ENCODE measurements at regions of chr1 and their contacts with region 1.

Region 1: GRCh38 chr1:1374929-1375662 is at the start of gene AURKAIP1:
- DNase-seq: peak; percentile 94 to 99
- H3K4me3 ChIP-seq: peak within 1 kb of the TSS; percentile 87 to 97 (median 88)
- H3K27ac ChIP-seq: peak within 1 kb of the TSS; percentile 63; the same call in 1 of the 2 replicates
- H3K4me1 ChIP-seq: peaks cover 0 to 12% (median 9%) of the 10 kb centered on the region in 4 experiments; a peak in 5 of 7 replicates
- H3K27me3 ChIP-seq: no peaks in the 10 kb centered on the region
- CTCF ChIP-seq: peak in 2 of 3 experiments; percentile 8 to 14; a peak in 2 of 4 replicates
- EP300 ChIP-seq: peak in 1 of 2 experiments; percentile 74; a peak in 1 of 3 replicates
- POLR2A ChIP-seq: peak in 1 of 2 experiments; percentile 54; a peak in 1 of 3 replicates
- RAD21 ChIP-seq: peak in 1 of 2 experiments; percentile 1; a peak in 1 of 4 replicates
- total RNA-seq, gene AURKAIP1: 194 TPM in 2 replicates

Region 2: DNA sequence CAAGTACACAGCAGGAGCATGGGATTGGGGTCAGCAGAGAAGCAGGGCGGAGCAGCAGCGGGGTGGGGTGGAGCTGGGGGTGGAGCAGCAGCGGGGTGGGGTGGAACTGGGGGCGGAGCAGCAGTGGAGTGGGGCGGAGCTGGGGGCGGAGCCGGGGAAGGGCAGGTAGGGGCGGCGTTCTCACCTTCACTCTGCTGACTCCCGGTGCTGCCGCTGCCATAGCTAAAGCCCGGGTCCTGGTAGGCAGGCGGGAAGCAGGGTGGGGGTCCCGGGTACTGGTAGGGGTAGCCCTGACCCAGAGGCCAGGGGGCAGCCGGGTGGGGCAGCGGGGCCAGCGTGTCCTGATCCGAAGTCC is 37.3 kb before region 1 on chr1:
- CTCF ChIA-PET with region 1: interaction called, 34 read pairs
- POLR2A ChIA-PET with region 1: interaction called, 18 read pairs
- DNase-seq: peak in 1 of 2 experiments; percentile 87
- H3K4me3 ChIP-seq: no peak overlapping the region
- H3K27ac ChIP-seq: no peak overlapping the region
- H3K4me1 ChIP-seq: no peaks in the 10 kb centered on the region; a peak in 1 of 7 replicates
- H3K27me3 ChIP-seq: no peaks in the 10 kb centered on the region; a peak in 1 of 7 replicates
- CTCF ChIP-seq: no peak
- EP300 ChIP-seq: no peak
- POLR2A ChIP-seq: no peak
- RAD21 ChIP-seq: no peak

Region 3: DNA sequence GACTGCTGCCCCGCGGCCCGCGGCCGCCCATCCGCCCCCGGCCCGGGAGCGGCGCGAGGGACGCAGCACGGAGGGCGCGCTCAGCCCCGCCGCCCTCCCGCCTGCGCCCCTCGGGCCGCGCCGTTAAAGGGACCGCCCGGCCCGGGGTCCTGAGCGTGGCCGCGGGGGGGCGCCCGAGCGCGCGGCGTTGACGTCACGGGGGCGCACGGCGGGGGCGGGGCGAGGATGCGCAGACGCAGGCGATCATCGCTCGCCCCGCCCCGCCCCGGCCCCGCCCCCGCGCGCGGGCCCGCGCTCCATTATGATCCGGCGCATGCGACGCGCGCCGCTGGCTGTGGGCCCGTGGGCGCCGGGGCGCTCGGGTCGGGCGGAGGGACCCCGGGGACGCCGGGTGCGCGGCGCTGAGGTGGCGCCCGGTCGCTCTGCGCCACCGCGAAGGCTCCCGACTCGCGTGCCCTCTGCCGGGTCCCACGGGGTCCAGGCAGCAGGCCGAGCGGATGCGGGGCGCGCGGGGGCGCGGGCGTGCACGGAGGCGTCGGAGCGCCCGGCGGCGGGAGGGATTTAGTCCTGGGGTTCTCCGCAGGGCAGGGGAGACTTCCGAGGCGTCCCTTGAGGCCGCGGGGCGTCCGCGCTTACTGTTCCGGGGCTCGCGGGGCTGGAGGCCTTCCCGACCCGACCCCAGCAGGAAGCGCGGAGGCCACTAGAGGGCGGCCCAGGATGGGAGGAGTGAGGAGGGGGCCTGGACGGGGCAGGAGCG is 25.7 kb before region 1 on chr1 and contains the start of gene DVL1:
- CTCF ChIA-PET with region 1: interaction called, 40 read pairs
- POLR2A ChIA-PET with region 1: interaction called, 80 read pairs
- DNase-seq: peak in 1 of 2 experiments; percentile 85
- H3K4me3 ChIP-seq: peak within 1 kb of the TSS; percentile 60 to 91 (median 79)
- H3K27ac ChIP-seq: peak within 1 kb of the TSS; percentile 83; the same call in 1 of the 2 replicates
- H3K4me1 ChIP-seq: peaks cover 0 to 45% (median 33%) of the 10 kb centered on the region in 4 experiments; a peak in 6 of 7 replicates
- H3K27me3 ChIP-seq: peaks cover 0 to 6% (median 4%) of the 10 kb centered on the region in 4 experiments; a peak in 5 of 7 replicates
- CTCF ChIP-seq: peak in 2 of 3 experiments; percentile 33 to 56; a peak in 3 of 4 replicates
- EP300 ChIP-seq: no peak
- POLR2A ChIP-seq: no peak
- RAD21 ChIP-seq: peak; percentile 45 to 49; a peak in 3 of 4 replicates
- total RNA-seq, gene DVL1: 56.0 and 58.9 TPM in 2 replicates

Region 4: DNA sequence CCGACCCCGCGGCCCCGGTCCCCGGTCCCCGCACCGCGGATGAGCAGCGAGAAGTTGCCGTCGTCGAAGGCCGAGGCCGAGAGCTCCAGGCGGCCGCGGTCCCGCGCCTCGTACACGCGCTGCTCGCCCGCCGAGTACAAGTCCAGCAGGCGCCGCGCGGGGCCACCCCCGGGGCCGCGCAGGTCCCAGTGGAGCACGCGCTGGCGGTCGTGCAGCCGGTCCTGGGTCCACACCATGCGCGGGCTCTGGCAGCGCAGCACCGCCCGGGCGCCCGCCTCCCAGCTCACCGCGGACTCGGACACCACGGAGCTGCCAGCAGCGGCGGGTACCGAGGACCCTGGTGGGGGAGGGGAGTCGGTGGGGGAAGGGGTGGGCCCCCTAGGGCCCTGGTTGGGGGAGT is 19.7 kb before region 1 on chr1:
- CTCF ChIA-PET with region 1: interaction called, 40 read pairs
- POLR2A ChIA-PET with region 1: interaction called, 80 read pairs
- DNase-seq: peak in 1 of 2 experiments; percentile 74
- H3K4me3 ChIP-seq: peak overlapping the region in 3 of 4 experiments; percentile 23 to 61 (median 26); a peak in 5 of 8 replicates
- H3K27ac ChIP-seq: no peak overlapping the region
- H3K4me1 ChIP-seq: peaks cover 2 to 48% (median 38%) of the 10 kb centered on the region in 4 experiments
- H3K27me3 ChIP-seq: peaks cover 9 to 17% (median 14%) of the 10 kb centered on the region in 4 experiments
- CTCF ChIP-seq: no peak
- EP300 ChIP-seq: no peak
- POLR2A ChIP-seq: no peak
- RAD21 ChIP-seq: no peak

Region 5: DNA sequence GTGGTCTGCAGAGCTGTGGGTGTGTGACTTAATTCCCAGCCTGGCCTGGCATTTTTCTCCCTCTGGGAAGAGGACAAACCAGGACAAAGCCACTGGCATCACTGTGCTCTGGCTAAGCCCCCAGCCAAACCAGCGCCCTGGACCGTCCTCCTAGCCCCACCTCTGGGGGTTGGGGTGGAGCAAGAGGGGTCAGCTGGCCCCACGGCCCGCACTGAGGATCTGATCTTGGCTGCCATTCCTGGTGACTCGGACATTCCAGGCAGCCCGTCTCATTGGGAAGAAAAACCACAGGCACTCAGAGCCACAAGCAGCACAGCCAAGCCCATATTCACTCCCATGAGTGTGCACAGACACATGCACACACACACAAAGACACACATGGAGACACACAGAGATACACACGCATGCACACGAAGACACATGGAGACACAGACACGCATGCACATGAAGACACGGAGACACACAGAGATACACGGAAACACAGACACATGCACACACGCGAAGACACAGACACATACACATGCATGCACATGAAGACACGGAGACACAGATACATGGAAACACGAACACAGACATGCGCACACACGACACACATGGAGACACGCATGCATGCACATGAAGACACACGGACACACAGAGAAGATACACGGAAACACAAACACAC is 14.5 kb before region 1 on chr1:
- CTCF ChIA-PET with region 1: interaction called, 18 read pairs
- POLR2A ChIA-PET with region 1: interaction called, 80 read pairs
- DNase-seq: no peak
- H3K4me3 ChIP-seq: no peak overlapping the region
- H3K27ac ChIP-seq: no peak overlapping the region
- H3K4me1 ChIP-seq: peaks cover 2 to 23% (median 17%) of the 10 kb centered on the region in 4 experiments
- H3K27me3 ChIP-seq: no peaks in the 10 kb centered on the region; a peak in 4 of 7 replicates
- CTCF ChIP-seq: no peak
- EP300 ChIP-seq: no peak
- POLR2A ChIP-seq: no peak
- RAD21 ChIP-seq: no peak

Region 6: DNA sequence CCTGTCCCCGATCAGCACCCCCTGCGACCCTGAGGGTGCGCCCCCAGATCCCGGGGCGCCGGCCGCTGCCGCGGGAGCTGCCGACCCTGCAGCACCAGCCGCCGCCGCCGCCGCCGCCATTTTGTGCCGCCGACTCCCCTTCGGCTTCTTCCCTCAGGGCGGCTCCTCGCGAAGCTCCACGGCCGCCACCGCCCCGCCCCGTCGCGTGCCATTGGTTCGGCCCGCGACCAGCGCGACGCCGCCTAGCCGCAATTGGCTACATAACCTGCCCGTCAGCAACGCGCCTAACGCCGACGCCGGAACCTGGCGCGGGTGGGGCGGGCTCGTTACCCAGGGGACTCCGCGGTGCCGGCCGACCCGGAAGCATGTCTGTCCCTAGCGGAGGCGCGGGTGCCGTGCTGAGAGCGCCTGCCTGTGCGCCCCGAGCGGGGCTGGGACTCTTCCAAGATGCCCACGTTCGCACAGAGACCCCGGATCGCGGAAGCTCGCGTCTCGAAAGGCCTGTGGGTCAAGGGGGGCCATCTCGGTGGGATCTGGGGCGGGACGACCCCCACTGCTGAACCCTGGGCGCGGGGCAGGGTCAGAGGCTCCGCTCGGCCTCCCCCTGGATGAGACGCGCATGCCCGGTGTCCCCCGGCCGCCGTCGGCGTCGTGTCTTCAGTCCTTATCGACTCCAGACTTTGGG is 24.2 kb after region 1 on chr1 and contains the start of gene CCNL2:
- CTCF ChIA-PET with region 1: interaction called, 17 read pairs
- POLR2A ChIA-PET with region 1: interaction called, 719 read pairs
- DNase-seq: peak; percentile 94 to 99
- H3K4me3 ChIP-seq: peak within 1 kb of the TSS; percentile 93 to 95 (median 94)
- H3K27ac ChIP-seq: peak within 1 kb of the TSS; percentile 89
- H3K4me1 ChIP-seq: peaks cover 0 to 18% (median 13%) of the 10 kb centered on the region in 4 experiments; a peak in 6 of 7 replicates
- H3K27me3 ChIP-seq: no peaks in the 10 kb centered on the region
- CTCF ChIP-seq: peak in 2 of 3 experiments; percentile 59 to 60; a peak in 3 of 4 replicates
- EP300 ChIP-seq: no peak
- POLR2A ChIP-seq: peak in 1 of 2 experiments; percentile 66; a peak in 1 of 3 replicates
- RAD21 ChIP-seq: peak; percentile 6 to 24; a peak in 2 of 4 replicates
- total RNA-seq, gene CCNL2: 120 TPM in 2 replicates

Region 7: GRCh38 chr1:1441002-1441888 is 66.1 kb after region 1 on chr1:
- CTCF ChIA-PET with region 1: interaction called, 11 read pairs
- POLR2A ChIA-PET with region 1: interaction called, 4 read pairs
- DNase-seq: peak in 1 of 2 experiments; percentile 87
- H3K4me3 ChIP-seq: no peak overlapping the region
- H3K27ac ChIP-seq: no peak overlapping the region
- H3K4me1 ChIP-seq: peaks cover 0 to 4% (median 3%) of the 10 kb centered on the region in 4 experiments; a peak in 5 of 7 replicates
- H3K27me3 ChIP-seq: peaks cover 0 to 3% (median 0%) of the 10 kb centered on the region in 4 experiments; a peak in 2 of 7 replicates
- CTCF ChIP-seq: peak in 2 of 3 experiments; percentile 73 to 76; a peak in 3 of 4 replicates
- EP300 ChIP-seq: no peak
- POLR2A ChIP-seq: no peak
- RAD21 ChIP-seq: peak; percentile 61 to 72